Activated T-helper 1 cell treated with anti-CD3 and anti-CD28 coated beads, Interleukin-12 subunit alpha, Interleukin-12 subunit beta, Interleukin-2, Interleukin-4 antibody, amounts not matched to agents 30 ng/mL and 10 ng/mL and 1 ng/mL, durations not matched to agents 14 hours and 24 hours and 36 hours (primary cell): ENCODE measurements at regions of chr4 and their contacts with region 1.

Region 1: DNA sequence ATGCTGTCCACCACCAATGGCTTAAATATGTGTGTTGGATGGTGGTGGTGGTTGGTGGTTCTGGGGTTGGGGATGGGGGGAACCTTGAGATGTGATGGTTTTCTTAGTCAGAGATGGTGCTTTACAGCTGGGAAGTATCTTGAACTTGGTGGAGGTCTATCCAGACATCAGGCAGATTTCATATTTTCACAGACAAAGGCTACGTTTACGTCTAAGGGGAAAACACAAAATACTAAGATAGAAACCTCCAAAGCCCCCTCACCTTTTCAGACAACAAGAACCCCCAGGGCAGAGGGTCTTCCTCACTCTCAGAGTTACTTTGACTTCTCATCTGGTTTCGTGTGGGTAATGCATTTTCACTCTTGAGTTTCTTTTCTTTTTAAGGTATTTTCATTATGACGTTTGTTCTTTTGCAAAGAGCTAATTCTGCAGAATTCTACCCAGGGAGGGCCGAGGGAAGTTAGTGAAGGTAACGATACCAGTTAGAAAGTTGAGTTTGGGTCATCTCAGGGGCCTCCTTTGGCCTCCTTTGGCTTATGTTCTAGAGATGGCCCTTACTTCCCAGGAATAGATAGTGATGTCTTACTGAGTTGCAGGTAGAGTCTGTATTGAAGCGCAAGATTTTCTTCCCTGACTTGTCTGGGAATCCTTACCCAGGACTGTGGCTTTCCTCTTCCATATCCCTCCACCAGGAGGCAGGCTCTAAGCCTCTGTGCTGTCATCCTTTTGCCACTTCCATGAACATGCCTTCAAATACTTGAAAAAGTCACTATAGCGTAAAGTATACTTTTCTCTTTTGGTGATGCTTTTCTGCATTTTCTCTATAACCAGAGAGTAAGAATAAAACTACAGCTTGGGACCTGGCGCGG is 31.9 kb downstream of the RHOH start:
- DNase-seq: no peak
- H3K4me3 Mint-ChIP-seq: peak overlapping the region; percentile 64
- H3K27ac Mint-ChIP-seq: peak overlapping the region; percentile 90
- H3K4me1 Mint-ChIP-seq: peaks cover 88% of the 10 kb centered on the region
- H3K27me3 Mint-ChIP-seq: no peaks in the 10 kb centered on the region

Region 2: GRCh38 chr4:40149960-40150385 is 78.8 kb before region 1 on chr4:
- intact Hi-C with region 1: loop called (anchors 1 kb)
- DNase-seq: peak; percentile 67
- H3K4me3 Mint-ChIP-seq: no peak overlapping the region
- H3K27ac Mint-ChIP-seq: peak overlapping the region; percentile 48
- H3K4me1 Mint-ChIP-seq: no peaks in the 10 kb centered on the region
- H3K27me3 Mint-ChIP-seq: no peaks in the 10 kb centered on the region

Region 3: DNA sequence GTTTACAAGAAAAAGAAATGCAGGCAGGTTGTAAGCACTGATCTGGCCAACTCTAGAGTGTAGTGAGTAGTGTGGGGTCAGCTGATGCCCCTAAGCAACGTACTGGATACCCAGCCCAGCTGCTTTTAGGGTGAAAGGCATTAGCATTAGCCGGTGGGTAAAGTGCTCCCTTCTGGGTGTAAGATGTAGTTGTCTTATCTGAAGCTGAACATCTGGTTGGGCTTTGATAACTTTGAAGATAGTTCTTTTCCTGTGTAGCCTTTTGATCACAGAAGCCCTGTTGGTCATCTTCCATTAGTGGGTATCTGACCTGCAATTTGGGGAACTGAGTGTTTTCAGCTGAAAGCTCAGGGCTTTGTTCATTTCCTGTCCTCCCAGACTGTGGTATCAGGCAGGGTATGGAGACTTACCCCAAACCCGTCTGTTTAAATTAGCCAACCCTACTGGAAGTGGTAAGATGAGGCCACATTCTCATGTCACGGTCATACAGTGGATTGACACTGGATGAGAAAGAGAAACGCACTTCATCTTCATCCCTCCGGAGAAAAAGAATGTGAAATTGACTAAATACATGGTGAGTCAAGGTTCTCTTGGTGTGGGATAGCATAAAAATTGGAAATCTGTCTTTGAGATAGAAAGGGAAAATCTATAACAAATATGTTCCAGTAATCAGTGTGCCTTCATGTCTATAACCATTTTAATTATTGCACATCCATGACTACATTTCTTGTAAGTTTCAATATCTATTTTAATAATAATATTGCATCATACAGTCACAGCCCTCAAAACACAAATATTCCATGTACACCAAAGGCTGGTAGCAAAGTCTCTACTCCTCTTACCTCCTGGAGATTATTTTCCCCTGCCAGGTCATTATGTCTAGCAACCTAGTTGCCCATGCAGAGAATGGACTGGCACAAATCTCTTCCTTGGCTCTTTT is 23.2 kb before region 1 on chr4:
- intact Hi-C with region 1: loop called (anchors 1 kb)
- DNase-seq: no peak
- H3K4me3 Mint-ChIP-seq: peak overlapping the region; percentile 95
- H3K27ac Mint-ChIP-seq: peak overlapping the region; percentile 97
- H3K4me1 Mint-ChIP-seq: peaks cover 82% of the 10 kb centered on the region
- H3K27me3 Mint-ChIP-seq: no peaks in the 10 kb centered on the region

Region 4: DNA sequence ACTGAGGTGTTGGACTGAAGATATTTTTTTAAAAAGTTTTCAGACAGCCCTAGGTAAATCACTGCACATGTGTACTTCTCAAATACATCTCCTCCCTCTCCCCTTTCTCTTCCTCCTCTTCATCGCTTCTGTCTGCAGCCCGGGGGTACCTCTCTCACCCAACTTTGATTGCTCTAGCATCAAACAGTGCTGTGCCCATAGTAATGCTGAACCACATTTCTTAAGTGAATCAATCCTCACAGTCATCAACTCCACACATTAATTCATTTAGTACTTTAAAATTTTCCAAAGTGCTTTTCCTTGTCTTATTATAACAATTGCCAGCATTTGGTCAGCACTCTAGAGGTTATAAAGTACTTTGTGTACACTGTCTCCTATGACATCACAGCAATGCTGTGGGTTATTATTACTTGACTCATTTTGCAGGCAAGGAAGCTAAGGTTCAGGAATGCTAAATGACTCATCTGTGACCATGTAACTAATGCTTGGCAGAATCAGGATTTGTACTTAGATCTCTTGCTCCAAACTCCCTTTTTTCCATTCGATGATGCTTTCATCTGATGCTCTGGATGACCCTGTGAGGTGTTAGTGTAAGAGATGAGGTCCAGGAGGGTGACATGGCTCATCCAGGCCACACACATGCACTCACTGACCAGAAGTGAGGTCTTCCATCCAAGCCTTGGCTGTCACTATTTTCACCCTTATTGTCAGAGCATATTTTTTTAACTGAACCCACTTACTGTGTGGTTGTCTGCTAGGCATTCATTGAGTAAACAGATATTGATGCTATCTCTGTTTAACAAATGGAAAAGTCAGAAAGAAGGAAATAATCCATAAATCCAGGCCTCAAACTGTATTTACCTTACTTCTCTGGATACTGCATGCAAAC is 26.9 kb after region 1 on chr4:
- intact Hi-C with region 1: loop called (anchors 1 kb)
- DNase-seq: no peak
- H3K4me3 Mint-ChIP-seq: peak overlapping the region; percentile 42
- H3K27ac Mint-ChIP-seq: peak overlapping the region; percentile 93
- H3K4me1 Mint-ChIP-seq: peaks cover 67% of the 10 kb centered on the region
- H3K27me3 Mint-ChIP-seq: no peaks in the 10 kb centered on the region

Region 5: DNA sequence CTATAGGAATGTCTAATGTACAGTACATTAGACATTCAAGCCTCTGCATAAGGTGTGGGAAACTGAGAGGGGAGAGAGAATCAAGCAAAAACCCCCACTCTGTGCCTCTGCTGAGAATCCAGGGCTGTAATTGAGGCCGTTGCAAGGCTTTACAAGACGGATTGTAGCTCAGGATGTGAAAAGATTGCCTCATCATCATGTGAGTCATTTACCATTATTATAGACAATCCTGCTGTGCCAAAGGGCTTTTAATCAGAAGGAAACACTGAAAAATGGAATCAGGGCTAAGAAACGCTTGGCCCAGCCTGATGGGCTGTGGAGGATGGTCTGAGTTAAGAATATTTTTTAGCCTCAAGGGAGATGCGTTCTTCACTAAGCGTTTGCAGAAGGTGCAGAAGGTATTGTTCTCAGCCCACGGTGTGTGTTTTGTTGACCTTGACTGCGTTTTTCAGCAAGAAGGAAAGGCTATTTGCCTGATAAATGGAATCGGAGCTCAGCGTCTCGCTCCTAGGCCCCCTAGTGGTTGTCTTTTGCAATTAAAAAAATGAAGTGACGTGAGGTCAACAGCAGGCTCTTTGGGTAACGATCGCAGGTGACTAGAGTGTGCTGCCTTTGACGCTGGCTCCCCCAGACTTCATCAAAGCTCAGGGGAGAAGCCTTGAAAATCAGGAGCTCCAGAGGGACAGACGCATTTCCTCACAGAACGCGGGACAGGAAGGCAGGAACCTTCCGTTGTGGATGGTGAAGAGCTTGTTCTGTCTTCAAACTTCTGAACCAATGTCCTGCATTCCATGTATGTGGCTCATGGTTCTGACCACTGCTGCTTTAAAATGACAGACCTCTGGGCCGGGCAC is 88.3 kb after region 1 on chr4:
- intact Hi-C with region 1: loop called (anchors 1 kb)
- DNase-seq: peak; percentile 59
- H3K4me3 Mint-ChIP-seq: peak overlapping the region; percentile 83
- H3K27ac Mint-ChIP-seq: peak overlapping the region; percentile 99
- H3K4me1 Mint-ChIP-seq: peaks cover 58% of the 10 kb centered on the region
- H3K27me3 Mint-ChIP-seq: no peaks in the 10 kb centered on the region

Region 6: GRCh38 chr4:40409835-40410234 is 181.1 kb after region 1 on chr4:
- intact Hi-C with region 1: no loop called
- DNase-seq: no peak
- H3K4me3 Mint-ChIP-seq: no peak overlapping the region
- H3K27ac Mint-ChIP-seq: no peak overlapping the region
- H3K4me1 Mint-ChIP-seq: no peaks in the 10 kb centered on the region
- H3K27me3 Mint-ChIP-seq: peaks cover 6% of the 10 kb centered on the region

Region 7: DNA sequence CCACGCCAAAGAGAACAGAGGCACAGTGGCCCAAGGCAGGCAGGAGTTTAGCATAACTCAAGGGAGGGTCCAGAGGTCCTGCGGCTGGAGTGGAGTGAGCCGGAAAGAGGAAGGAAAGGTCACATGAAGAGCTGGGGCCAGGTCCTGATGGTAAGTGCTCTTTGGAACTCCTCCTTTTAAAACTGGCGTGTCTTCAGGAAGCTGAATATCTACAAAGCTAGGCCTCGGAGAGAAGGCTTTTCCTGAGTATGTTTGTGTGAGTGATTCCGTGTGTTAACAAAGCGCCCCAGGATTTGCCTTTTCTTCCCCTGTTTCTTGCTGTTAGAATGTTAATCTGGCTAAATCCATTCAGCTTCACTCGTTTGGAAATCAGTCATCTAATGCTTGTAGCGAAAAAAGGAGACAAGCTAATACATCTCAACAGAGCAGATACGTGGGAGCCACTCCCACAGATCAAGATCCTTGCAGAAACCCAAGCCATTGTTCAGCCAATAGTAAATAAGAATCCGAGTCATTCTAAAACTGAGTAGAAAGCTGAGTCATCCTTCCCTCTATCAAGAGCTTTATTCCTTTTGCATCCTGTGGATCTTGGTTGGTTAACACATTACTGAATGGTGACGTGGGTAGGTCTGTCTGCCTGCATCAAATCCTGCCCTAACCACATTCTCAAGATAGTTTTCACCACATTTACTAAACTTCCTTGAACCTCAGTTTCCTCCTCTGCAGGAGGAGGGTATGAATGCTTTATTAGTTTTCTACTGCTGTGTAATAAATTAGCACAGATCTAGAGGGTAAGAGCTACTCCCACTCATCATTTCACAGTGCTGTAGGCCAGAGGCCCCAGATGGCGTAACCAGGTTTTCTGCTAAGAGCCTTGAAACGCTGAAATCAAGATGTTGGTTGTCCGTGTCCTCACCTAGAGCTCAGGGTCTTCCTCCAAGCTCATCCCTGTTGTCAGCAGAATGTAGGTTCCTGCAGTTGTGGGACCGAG is 444.1 kb after region 1 on chr4:
- intact Hi-C with region 1: loop called (anchors 2 kb)
- DNase-seq: peak; percentile 59
- H3K4me3 Mint-ChIP-seq: peak overlapping the region; percentile 57
- H3K27ac Mint-ChIP-seq: peak overlapping the region; percentile 86
- H3K4me1 Mint-ChIP-seq: peaks cover 68% of the 10 kb centered on the region
- H3K27me3 Mint-ChIP-seq: no peaks in the 10 kb centered on the region